Activated T-helper 1 cell treated with anti-CD3 and anti-CD28 coated beads, Interleukin-12 subunit alpha, Interleukin-12 subunit beta, Interleukin-2, Interleukin-4 antibody, amounts not matched to agents 30 ng/mL and 10 ng/mL and 1 ng/mL, durations not matched to agents 14 hours and 24 hours and 36 hours (primary cell): ENCODE measurements at regions of chr12 and their contacts with region 1.

Region 1: DNA sequence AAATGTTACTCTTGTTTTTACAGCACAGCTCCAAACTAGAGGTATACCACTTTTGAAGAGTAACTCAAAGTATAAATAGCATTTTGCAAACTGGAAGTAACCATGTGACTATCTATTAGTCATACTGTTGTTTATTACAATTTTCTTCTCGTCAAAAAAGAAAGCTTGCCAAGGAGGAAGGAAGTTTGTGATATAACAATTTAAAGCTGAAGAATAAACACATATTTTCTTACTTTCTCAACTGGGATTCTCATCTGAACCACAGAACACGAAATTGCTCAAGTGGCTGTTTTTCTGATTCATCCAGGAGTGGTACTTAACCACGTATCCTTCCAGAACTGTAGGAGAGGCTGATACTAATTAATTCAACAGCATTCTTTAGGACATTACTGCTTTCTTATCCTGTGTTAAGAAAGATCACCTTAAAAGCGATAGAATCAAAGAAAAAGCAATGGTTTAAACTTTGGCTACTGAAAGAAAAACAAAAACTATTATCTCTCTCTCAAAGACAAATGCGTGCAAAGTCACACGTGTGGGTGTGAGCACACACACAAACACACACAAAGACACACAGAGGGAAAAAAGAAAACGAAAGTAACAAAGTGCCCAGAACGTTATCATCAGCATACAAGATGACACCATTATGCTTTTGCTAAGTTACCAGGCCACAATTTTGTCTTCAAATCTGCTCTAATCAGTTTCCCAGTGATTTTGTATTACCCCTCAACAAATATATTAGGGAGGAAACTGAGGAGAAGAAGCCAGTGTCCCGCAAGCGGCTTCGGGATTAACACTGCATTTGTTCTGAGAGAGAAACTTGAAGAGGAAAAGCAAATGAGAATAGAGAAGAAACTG is at the start of gene CLEC2B:
- DNase-seq: peak; percentile 17
- H3K4me3 Mint-ChIP-seq: peak within 1 kb of the TSS; percentile 93
- H3K27ac Mint-ChIP-seq: peak within 1 kb of the TSS; percentile 97
- H3K4me1 Mint-ChIP-seq: peaks cover 45% of the 10 kb centered on the region
- H3K27me3 Mint-ChIP-seq: no peaks in the 10 kb centered on the region
- total RNA-seq, gene CLEC2B: 13.1 and 14.3 TPM in 2 replicates

Region 2: GRCh38 chr12:9634177-9634803 is 235.2 kb before region 1 on chr12:
- intact Hi-C with region 1: loop called (anchors 1 kb)
- DNase-seq: peak; percentile 64
- H3K4me3 Mint-ChIP-seq: peak overlapping the region; percentile 60
- H3K27ac Mint-ChIP-seq: peak overlapping the region; percentile 63
- H3K4me1 Mint-ChIP-seq: peaks cover 60% of the 10 kb centered on the region
- H3K27me3 Mint-ChIP-seq: peaks cover 3% of the 10 kb centered on the region

Region 3: DNA sequence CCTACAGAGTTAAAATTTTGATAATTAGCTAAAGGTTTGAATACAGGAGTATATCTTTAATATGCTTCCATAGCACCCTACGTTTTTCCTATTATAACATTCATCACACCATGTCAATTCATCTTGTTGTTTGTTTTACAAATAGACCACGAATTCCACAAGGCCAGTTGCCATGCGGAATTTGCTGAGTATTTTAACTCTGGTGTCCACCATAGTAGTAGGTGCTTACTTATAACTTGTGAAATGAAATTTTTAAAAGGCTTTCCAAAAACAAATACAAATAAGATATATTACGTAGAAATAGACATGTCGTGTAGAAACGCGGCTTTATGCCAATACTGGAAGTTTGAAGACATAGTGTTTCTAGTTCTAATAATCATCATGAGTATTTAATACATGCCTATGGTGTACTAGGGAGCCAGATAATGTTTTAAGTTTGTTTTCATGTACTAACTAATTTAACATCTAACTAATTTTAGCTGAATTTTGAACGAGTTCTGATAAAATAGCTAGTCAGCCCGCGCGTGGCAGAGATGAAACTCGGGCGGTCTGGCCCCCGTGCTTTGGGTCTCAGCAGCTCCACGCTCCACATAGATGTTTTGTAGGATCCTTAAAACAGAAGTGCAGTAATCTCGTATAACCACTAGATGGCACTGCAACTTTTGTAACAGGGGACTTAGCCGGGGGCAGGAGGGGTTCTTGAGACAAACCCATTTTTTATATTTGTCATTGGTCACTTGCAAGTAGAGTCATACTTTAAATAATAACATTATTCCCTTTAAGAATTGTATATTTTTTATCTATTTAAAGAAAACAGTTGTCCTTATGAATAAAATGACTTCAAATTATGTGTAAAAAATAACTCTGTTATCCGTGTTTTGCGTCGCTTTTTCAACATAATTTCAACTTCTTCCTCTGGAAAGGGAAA is 119.0 kb before region 1 on chr12:
- intact Hi-C with region 1: loop called (anchors 2 kb)
- DNase-seq: peak; percentile 55
- H3K4me3 Mint-ChIP-seq: peak overlapping the region; percentile 58
- H3K27ac Mint-ChIP-seq: peak overlapping the region; percentile 79
- H3K4me1 Mint-ChIP-seq: peaks cover 62% of the 10 kb centered on the region
- H3K27me3 Mint-ChIP-seq: no peaks in the 10 kb centered on the region

Region 4: DNA sequence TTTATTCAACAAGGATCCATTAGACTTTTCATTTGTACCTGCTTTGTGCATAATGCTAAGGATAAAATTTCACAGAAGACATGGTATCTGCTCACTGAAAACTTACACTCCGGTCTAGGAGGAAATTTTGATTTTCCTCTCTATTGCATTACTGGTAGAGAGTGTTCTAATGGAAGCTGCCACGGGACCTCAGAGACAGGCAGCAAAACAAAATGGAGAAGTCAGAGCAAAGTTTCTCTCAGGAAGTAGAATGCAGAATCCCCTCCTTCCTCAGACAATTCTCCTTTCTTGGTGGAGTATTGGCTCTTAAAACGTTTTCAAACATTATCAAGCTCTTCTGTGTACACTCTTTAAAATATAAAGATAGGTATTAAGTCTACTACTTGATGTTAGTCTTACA is 12.6 kb before region 1 on chr12:
- intact Hi-C with region 1: loop called (anchors 1 kb)
- DNase-seq: no peak
- H3K4me3 Mint-ChIP-seq: no peak overlapping the region
- H3K27ac Mint-ChIP-seq: no peak overlapping the region
- H3K4me1 Mint-ChIP-seq: peaks cover 53% of the 10 kb centered on the region
- H3K27me3 Mint-ChIP-seq: no peaks in the 10 kb centered on the region

Region 5: DNA sequence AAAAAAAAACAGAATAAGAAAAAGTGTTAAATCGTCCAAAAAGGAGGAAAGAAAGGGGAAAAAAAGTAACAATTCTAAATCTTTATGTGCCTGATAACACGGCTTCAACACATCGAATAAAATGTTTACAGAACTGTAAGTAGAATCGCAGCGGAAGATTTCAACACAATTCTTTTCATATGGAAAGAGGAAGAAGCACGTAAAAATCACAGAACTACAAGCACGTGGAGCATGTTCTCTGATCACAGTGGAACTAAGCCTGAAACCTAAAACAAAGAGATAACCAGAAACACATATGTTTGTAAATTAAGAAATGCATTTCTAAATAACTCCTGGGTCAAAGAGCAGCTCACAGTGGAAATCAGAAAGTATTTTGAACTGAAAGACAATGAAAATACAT is 251.7 kb after region 1 on chr12:
- intact Hi-C with region 1: no loop called
- DNase-seq: no peak
- H3K4me3 Mint-ChIP-seq: no peak overlapping the region
- H3K27ac Mint-ChIP-seq: no peak overlapping the region
- H3K4me1 Mint-ChIP-seq: no peaks in the 10 kb centered on the region
- H3K27me3 Mint-ChIP-seq: peaks cover 19% of the 10 kb centered on the region

Region 6: DNA sequence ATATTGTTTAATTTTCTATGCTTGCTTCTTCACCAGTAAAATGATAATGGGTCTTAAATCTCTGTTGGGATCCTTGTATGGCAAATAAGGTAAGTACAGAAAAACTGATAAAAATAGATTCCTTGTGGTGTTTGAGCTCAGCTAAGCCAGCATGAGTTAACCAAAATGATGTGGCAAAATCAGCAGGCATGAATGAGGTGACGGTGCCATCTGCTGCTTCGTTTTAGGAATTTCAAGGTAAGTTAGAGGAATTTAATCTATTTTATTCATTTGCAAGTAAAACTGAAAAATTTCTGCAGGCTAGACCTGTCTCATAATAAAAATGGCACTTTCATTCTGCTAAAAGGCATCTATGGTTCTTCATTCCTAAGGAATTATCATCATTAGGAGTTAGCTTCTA is 270.5 kb after region 1 on chr12:
- intact Hi-C with region 1: loop called (anchors 5 kb)
- DNase-seq: peak; percentile 25
- H3K4me3 Mint-ChIP-seq: no peak overlapping the region
- H3K27ac Mint-ChIP-seq: no peak overlapping the region
- H3K4me1 Mint-ChIP-seq: no peaks in the 10 kb centered on the region
- H3K27me3 Mint-ChIP-seq: peaks cover 46% of the 10 kb centered on the region

Region 7: GRCh38 chr12:10341892-10342509 is 472.5 kb after region 1 on chr12:
- intact Hi-C with region 1: no loop called
- DNase-seq: no peak
- H3K4me3 Mint-ChIP-seq: no peak overlapping the region
- H3K27ac Mint-ChIP-seq: no peak overlapping the region
- H3K4me1 Mint-ChIP-seq: no peaks in the 10 kb centered on the region
- H3K27me3 Mint-ChIP-seq: peaks cover 9% of the 10 kb centered on the region

Region 8: DNA sequence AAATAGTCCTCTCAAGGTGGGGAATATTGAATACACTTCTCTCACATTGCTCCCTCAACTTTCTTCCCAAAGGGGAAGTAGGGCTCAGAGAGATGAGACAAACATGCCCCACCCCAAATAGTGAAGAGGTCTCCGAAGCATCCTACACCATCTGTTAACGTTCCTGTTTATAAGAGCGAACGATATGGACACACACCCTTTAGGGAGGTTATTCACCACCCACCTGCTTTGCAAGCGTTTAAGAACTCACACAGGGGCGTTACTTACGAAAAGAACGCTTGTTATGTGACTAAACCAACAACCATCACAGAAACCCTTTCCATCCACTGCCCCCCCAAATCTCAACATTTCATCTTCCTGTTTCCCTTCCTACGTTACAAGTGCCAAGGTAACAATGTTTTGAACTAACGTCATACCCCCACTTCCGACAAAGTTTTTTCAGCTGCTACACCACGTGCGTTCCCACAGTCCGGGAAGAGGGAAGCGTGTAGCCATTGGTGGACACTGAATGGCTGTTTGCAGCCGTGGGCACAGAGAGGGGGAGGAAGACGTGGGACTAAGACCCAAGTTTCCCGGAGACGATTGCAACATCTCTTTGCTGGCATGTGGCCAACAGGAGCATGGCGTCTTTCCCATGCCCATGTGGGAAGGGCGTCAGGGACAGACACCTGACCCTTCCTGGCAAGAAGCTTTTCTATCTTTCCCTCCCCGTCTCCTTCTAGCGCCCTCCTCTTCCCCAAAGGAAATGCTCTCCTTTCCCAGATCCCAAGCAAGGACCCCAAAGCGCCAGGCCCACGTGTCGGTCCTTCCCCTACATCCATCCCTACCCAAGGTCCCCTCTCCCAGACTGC is 852.3 kb after region 1 on chr12:
- intact Hi-C with region 1: loop called (anchors 5 kb)
- DNase-seq: peak; percentile 53
- H3K4me3 Mint-ChIP-seq: peak overlapping the region; percentile 96
- H3K27ac Mint-ChIP-seq: peak overlapping the region; percentile 96
- H3K4me1 Mint-ChIP-seq: peaks cover 60% of the 10 kb centered on the region
- H3K27me3 Mint-ChIP-seq: peaks cover 34% of the 10 kb centered on the region